ENCODE measurements at regions of chr12 and their contacts with region 1.

Region 1: DNA sequence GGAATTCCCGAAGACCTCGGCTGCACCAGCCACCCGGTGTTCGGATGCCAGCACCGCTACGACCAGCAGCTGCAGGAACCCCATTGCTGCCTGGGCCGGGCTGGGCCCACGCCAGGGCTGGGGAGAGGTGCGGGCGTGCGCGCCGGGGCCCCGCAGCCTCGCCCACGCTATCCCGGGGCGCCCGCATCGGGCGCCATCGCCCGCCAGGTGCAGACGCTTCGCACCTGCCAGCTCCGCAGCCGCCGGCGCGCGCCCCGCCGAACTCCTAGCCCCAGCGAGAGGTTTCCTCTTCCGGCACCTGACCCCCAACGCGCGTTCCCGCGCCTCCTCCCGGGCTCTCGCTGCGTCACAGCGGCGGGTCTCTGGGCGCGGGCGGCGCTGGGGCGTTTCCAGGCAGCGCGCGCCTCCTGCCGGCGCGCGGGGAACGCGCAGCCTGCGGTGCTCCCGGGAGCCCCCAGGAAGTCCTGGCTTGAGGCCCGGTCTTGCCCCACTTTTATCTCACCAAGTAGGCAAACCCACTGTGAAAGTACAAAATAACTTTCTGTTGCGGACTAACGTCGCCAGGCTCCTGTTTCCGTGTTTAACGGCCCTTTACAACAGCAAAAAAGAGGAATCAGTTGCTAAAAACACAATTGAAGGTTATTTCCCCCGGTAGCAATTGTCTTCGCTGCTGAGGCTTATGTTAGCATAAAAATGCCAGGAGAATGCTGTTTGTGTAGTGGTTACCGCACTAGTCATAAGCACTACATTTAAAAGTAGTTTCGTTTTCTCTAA is at the start of gene TM7SF3:
- DNase-seq: peak; percentile 96
- H3K4me3 ChIP-seq: peak within 1 kb of the TSS; percentile 84 to 99
- H3K27ac ChIP-seq: peak within 1 kb of the TSS; percentile 66 to 92
- H3K4me1 ChIP-seq: peaks cover 0 to 19% of the 10 kb centered on the region in 2 experiments; a peak in 3 of 4 replicates
- H3K27me3 ChIP-seq: no peaks in the 10 kb centered on the region
- CTCF ChIP-seq: peak; percentile 88
- EP300 ChIP-seq: no peak
- RAD21 ChIP-seq: peak; percentile 89
- polyA plus RNA-seq, gene TM7SF3: 72.1 and 121 TPM in 2 replicates

Region 2: GRCh38 chr12:27003421-27004381 is 10.6 kb before region 1 on chr12:
- CTCF ChIA-PET with region 1: interaction called, 25 read pairs
- POLR2A ChIA-PET with region 1: no interaction called
- DNase-seq: peak; percentile 44
- H3K4me3 ChIP-seq: no peak overlapping the region
- H3K27ac ChIP-seq: peak overlapping the region in 1 of 2 experiments; percentile 47; a peak in 2 of 4 replicates
- H3K4me1 ChIP-seq: peaks cover 14 to 32% of the 10 kb centered on the region in 2 experiments; a peak in 3 of 4 replicates
- H3K27me3 ChIP-seq: no peaks in the 10 kb centered on the region
- CTCF ChIP-seq: no peak
- EP300 ChIP-seq: peak in 1 of 2 experiments; percentile 24; a peak in 1 of 4 replicates
- RAD21 ChIP-seq: no peak

Region 3: DNA sequence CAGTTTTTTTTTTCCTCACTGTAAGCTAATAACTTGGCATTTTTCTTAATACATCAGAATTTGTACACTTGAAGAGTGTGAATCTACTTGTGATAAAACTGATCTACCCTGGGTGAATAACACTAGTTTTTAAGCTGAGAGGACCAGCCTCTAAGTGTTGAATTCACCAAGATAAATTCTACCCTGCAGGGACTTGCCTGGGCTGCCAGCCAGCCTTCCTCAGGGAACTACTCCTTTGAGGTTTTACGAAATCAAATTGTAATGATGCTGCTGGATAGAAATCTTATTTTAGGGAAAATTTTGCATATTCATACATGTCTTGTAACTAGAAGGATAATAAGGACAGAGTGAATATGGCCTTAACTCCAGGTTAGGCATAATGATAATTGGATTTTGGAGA is 10.0 kb after region 1 on chr12:
- CTCF ChIA-PET with region 1: interaction called, 18 read pairs
- POLR2A ChIA-PET with region 1: no interaction called
- DNase-seq: no peak
- H3K4me3 ChIP-seq: no peak overlapping the region
- H3K27ac ChIP-seq: no peak overlapping the region
- H3K4me1 ChIP-seq: peaks cover 9 to 16% of the 10 kb centered on the region in 2 experiments; a peak in 3 of 4 replicates
- H3K27me3 ChIP-seq: no peaks in the 10 kb centered on the region
- CTCF ChIP-seq: no peak
- EP300 ChIP-seq: no peak
- RAD21 ChIP-seq: no peak

Measured in SK-N-SH (cell line).